K562 (cell line): ENCODE measurements at regions of chr2 and their contacts with region 1.

Region 1: GRCh38 chr2:74587664-74588277 is 33.3 kb downstream of the DOK1 start:
- DNase-seq: peak; percentile 41 to 82 (median 62)
- ATAC-seq: peak; percentile 91
- H3K4me3 ChIP-seq: no peak overlapping the region
- H3K27ac ChIP-seq: no peak overlapping the region
- H3K4me1 ChIP-seq: peaks cover 3% of the 10 kb centered on the region in 2 experiments; a peak in 3 of 5 replicates
- H3K27me3 ChIP-seq: peaks cover 3 to 4% of the 10 kb centered on the region in 2 experiments; a peak in 2 of 5 replicates
- CTCF ChIP-seq: peak; percentile 73 to 90 (median 76)
- EP300 ChIP-seq: no peak
- POLR2A ChIP-seq: no peak
- RAD21 ChIP-seq: peak; percentile 89 to 91

Region 2: DNA sequence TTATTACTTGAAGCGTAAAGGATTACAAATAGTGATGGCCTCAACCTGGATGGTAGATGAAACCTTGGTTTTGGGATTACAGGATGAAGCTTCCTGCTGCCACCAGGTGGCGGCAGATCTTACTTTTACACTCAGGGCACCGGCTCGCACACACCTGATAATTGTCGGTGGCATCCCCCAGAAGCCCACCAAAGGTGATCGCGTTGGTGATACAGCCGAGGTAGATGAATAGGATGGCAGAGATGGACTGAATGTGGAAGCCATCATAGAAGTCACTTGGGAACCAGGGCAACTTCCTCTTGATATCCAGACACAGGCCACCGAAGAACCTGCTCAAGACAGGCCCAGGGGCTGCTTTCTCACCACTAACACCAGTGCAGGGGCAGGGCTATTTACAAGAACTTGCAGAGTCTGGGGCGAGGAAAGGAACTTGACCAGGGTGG is 337.6 kb before region 1 on chr2:
- CTCF ChIA-PET with region 1: interaction called, 6 read pairs
- POLR2A ChIA-PET with region 1: no interaction called
- in situ Hi-C with region 1: no loop called
- intact Hi-C with region 1: loop called (anchors 10 kb)
- DNase-seq: peak; percentile 72 to 76 (median 75)
- ATAC-seq: peak; percentile 88
- H3K4me3 ChIP-seq: no peak overlapping the region
- H3K27ac ChIP-seq: no peak overlapping the region
- H3K4me1 ChIP-seq: peaks cover 0 to 3% of the 10 kb centered on the region in 2 experiments; a peak in 2 of 5 replicates
- H3K27me3 ChIP-seq: peaks cover 9 to 40% of the 10 kb centered on the region in 2 experiments; a peak in 4 of 5 replicates
- CTCF ChIP-seq: peak; percentile 75 to 87 (median 86)
- EP300 ChIP-seq: no peak; the same call in 1 of the 2 replicates
- POLR2A ChIP-seq: no peak
- RAD21 ChIP-seq: peak; percentile 72 to 89

Region 3: DNA sequence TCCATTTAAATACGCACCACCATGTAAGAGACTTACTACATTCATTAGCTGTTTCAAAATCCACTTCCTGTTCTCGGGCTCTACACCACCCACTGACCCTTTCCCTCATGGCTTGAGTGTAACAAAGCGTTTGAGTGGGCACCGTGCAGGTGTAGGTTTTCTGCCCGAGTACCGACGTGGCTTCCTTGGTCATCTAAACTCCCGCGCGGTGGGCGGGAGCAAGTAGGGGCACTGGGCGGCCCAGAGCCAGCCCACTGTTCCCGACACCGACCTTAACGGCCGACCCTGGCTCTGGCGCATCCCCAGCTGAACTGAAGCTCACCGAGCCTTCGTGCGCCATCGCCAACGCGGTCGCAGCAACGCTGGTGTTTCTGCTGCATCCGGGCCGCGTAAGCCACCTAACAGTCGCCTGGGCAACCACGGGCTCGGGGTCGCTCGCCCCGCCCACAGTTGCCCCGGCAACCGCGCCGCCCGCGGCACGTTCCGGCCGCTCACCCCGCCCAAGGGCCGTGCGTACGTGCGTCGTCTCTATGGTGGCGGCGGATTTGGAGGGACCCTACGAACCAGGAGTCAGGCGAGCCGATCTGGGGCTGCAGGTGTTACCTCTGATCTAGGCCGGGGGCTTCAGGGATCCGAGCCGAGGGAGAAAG is 166.4 kb before region 1 on chr2 and contains the starts of genes C2orf81 and WDR54:
- CTCF ChIA-PET with region 1: no interaction called
- POLR2A ChIA-PET with region 1: no interaction called
- in situ Hi-C with region 1: no loop called
- intact Hi-C with region 1: loop called (anchors 5 kb)
- DNase-seq: peak; percentile 90 to 97 (median 94)
- ATAC-seq: peak; percentile 94
- H3K4me3 ChIP-seq: peak within 1 kb of the TSS; percentile 53
- H3K27ac ChIP-seq: no peak within 1 kb of the TSS; the same call in 2 of the 3 replicates
- H3K4me1 ChIP-seq: peaks cover 5 to 25% of the 10 kb centered on the region in 2 experiments; a peak in 3 of 5 replicates
- H3K27me3 ChIP-seq: peaks cover 4 to 12% of the 10 kb centered on the region in 2 experiments; a peak in 3 of 5 replicates
- CTCF ChIP-seq: no peak
- EP300 ChIP-seq: no peak
- POLR2A ChIP-seq: no peak
- RAD21 ChIP-seq: no peak
- polyA plus RNA-seq, gene C2orf81: not detected
- polyA plus RNA-seq, gene WDR54: 9.3 to 9.6 TPM

Region 4: DNA sequence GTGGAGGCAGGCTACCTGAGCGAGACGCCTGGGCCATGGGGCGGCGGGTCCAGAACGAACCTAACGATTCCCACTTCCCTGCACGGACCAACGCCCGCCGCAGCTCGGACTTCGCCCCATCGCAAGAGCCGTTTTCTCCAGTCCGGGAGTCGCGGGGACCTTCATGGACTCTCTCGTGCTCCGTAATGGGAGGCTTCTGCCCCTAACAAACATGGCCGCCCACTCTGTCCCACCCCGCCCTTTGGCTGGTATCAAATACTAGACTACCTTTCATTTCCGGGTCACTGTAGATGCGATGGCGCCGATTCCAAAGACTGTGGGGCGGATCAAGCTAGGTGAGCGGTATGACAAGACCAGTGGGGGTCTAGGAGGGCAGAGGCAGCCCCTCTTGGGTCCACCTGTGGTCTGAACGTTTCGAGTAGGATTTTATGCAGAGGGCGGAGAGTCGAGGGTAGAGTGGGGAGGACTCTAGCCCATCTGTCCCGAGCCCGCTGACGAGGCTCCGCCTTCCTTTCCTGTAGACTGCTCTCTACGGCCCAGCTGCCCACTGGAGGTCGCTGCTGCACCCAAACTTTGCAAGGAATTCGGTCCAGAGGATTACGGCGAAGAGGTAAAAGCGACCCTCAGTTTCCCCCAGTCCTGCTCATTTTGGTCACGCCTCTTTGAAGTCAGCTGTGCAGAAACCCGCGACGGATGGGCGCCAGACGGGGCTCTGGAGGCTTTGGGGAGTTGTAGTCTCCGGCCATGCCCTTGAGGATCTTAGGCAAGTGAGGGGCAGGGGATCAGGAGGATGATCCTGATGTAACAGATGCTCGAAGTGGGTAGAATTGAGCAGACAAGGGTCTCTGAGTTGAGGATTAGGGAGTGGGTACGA is 104.7 kb before region 1 on chr2 and contains the starts of genes CCDC142 and TTC31:
- CTCF ChIA-PET with region 1: interaction called, 6 read pairs
- POLR2A ChIA-PET with region 1: interaction called, 5 read pairs
- in situ Hi-C with region 1: no loop called
- intact Hi-C with region 1: loop called (anchors 1 kb)
- DNase-seq: peak; percentile 90 to 96 (median 91)
- ATAC-seq: peak; percentile 95
- H3K4me3 ChIP-seq: peak within 1 kb of the TSS; percentile 86
- H3K27ac ChIP-seq: peak within 1 kb of the TSS; percentile 92
- H3K4me1 ChIP-seq: peaks cover 8 to 23% of the 10 kb centered on the region in 2 experiments; a peak in 4 of 5 replicates
- H3K27me3 ChIP-seq: no peaks in the 10 kb centered on the region
- CTCF ChIP-seq: peak; percentile 86 to 95 (median 92)
- EP300 ChIP-seq: 0 out of 2 replicates have a peak, but pooled peaks have one; percentile 1
- POLR2A ChIP-seq: peak; percentile 91
- RAD21 ChIP-seq: peak; percentile 88 to 89
- polyA plus RNA-seq, gene CCDC142: 0.55 to 0.58 TPM
- polyA plus RNA-seq, gene TTC31: 4.7 to 5.0 TPM

Region 5: DNA sequence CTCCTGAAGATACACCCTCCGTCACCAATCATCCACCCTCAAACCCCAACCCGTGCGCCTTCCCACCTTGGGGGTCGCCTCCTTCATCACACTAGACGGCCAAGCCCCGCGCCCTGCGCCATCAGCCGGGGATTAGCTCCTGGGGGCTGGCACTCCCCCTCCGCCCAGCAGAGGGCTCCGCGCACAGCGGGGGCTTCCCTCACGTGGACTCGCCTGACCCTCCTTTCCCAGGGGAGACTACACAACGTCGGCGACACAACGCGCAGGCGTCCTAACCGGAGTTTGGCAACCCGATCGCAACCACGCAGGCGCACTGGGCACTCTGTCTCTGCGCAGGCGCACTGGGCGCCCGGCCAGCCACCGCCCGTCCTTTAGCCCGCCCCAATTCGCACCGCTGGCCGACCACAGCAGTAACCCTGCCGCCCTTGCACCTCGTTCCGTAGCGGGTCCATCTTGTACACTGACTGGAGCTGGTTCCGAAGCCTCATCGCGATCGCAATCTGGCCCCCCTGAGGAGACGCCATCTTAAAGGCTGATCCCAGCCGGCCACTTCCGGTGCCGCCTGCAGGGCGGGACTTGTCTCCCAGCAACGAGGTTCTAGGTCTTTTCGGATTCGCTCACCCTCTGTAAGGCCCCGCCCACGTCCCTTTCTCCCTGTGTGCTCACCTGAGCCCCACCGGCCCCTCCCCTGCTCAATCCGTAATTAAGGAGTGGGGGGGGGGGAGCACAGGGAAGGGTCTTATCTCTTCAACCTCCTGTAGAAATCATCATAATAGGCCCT is 80.4 kb before region 1 on chr2 and contains the start of gene PCGF1:
- CTCF ChIA-PET with region 1: no interaction called
- POLR2A ChIA-PET with region 1: interaction called, 4 read pairs
- in situ Hi-C with region 1: no loop called
- intact Hi-C with region 1: loop called (anchors 1 kb)
- DNase-seq: peak; percentile 95 to 99 (median 96)
- ATAC-seq: peak; percentile 80
- H3K4me3 ChIP-seq: peak within 1 kb of the TSS; percentile 78
- H3K27ac ChIP-seq: peak within 1 kb of the TSS; percentile 97
- H3K4me1 ChIP-seq: peaks cover 36 to 55% of the 10 kb centered on the region in 2 experiments; a peak in 4 of 5 replicates
- H3K27me3 ChIP-seq: no peaks in the 10 kb centered on the region
- CTCF ChIP-seq: peak; percentile 42 to 57 (median 54); a peak in 5 of 6 replicates
- EP300 ChIP-seq: peak; percentile 17; the same call in 1 of the 2 replicates
- POLR2A ChIP-seq: peak; percentile 86
- RAD21 ChIP-seq: peak; percentile 15 to 30; a peak in 3 of 4 replicates
- polyA plus RNA-seq, gene PCGF1: 45.3 to 45.7 TPM

Region 6: GRCh38 chr2:74573747-74574562 is 13.8 kb before region 1 on chr2:
- CTCF ChIA-PET with region 1: no interaction called
- POLR2A ChIA-PET with region 1: interaction called, 13 read pairs
- in situ Hi-C with region 1: no loop called
- intact Hi-C with region 1: no loop called
- DNase-seq: peak in 2 of 4 experiments; percentile 63 to 70
- ATAC-seq: peak; percentile 76
- H3K4me3 ChIP-seq: no peak overlapping the region
- H3K27ac ChIP-seq: peak overlapping the region; percentile 43
- H3K4me1 ChIP-seq: peaks cover 0 to 42% of the 10 kb centered on the region in 2 experiments; a peak in 4 of 5 replicates
- H3K27me3 ChIP-seq: no peaks in the 10 kb centered on the region
- CTCF ChIP-seq: no peak; a peak in 1 of 6 replicates
- EP300 ChIP-seq: peak; percentile 48; the same call in 1 of the 2 replicates
- POLR2A ChIP-seq: 0 out of 2 replicates have a peak, but pooled peaks have one; percentile 24
- RAD21 ChIP-seq: no peak; a peak in 1 of 4 replicates

Region 7: DNA sequence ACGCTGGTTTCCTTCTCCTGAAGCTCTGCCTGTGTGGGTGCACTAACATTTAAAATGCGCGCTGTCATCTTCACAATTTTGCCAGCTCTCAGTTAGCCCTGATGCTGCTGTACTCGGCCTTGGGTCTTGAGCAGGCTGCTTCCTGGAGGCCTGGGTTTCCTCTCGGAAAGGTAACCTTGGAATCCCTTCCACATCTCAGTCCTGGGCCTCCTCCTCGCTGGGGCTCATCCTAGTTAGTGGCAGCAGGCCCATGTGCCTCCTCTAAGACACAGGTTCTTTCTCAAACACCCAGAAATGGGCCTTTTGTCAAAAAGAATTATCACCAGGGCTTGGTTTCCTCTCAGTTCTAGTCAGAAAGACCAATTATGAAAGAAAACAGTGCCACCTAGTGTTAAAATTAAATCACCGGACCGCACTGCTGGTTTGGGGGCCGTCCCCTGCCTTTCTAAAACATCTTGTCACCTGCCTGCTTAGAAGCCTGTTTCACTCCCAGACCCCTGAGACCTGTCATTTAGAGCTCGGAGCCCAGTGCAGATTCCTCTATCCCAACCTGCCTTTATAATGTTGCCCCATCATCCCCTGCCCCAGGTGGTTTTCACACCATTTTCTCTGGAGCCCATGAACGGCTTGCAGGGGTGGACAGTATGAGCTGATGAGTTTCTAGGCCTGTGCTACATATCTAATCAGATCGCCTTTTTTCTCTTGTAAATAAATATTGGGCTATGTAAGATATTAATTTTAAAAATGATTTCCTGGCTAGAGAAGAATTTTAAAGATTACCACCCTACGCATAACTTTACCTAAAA is 288.5 kb after region 1 on chr2:
- CTCF ChIA-PET with region 1: no interaction called
- POLR2A ChIA-PET with region 1: interaction called, 3 read pairs
- in situ Hi-C with region 1: no loop called
- intact Hi-C with region 1: loop called (anchors 2 kb)
- DNase-seq: peak; percentile 57 to 63 (median 60)
- ATAC-seq: peak; percentile 98
- H3K4me3 ChIP-seq: no peak overlapping the region
- H3K27ac ChIP-seq: no peak overlapping the region
- H3K4me1 ChIP-seq: no peaks in the 10 kb centered on the region
- H3K27me3 ChIP-seq: no peaks in the 10 kb centered on the region
- CTCF ChIP-seq: peak; percentile 62 to 76 (median 66)
- EP300 ChIP-seq: no peak
- POLR2A ChIP-seq: no peak
- RAD21 ChIP-seq: peak; percentile 77 to 87

Region 8: GRCh38 chr2:75021657-75022056 is 433.9 kb after region 1 on chr2:
- CTCF ChIA-PET with region 1: no interaction called
- POLR2A ChIA-PET with region 1: no interaction called
- in situ Hi-C with region 1: no loop called
- intact Hi-C with region 1: no loop called
- DNase-seq: no peak
- ATAC-seq: no peak
- H3K4me3 ChIP-seq: no peak overlapping the region
- H3K27ac ChIP-seq: no peak overlapping the region
- H3K4me1 ChIP-seq: no peaks in the 10 kb centered on the region
- H3K27me3 ChIP-seq: peaks cover 0 to 10% of the 10 kb centered on the region in 2 experiments; a peak in 3 of 5 replicates
- CTCF ChIP-seq: no peak
- EP300 ChIP-seq: no peak
- POLR2A ChIP-seq: no peak
- RAD21 ChIP-seq: no peak

Region 9: GRCh38 chr2:75076088-75076487 is 488.3 kb after region 1 on chr2:
- CTCF ChIA-PET with region 1: no interaction called
- POLR2A ChIA-PET with region 1: no interaction called
- in situ Hi-C with region 1: no loop called
- intact Hi-C with region 1: no loop called
- DNase-seq: no peak
- ATAC-seq: no peak
- H3K4me3 ChIP-seq: no peak overlapping the region
- H3K27ac ChIP-seq: no peak overlapping the region
- H3K4me1 ChIP-seq: no peaks in the 10 kb centered on the region
- H3K27me3 ChIP-seq: peaks cover 0 to 3% of the 10 kb centered on the region in 2 experiments; a peak in 1 of 5 replicates
- CTCF ChIP-seq: no peak
- EP300 ChIP-seq: no peak
- POLR2A ChIP-seq: no peak
- RAD21 ChIP-seq: no peak

Region 10: GRCh38 chr2:75513616-75514170 is 925.9 kb after region 1 on chr2:
- CTCF ChIA-PET with region 1: no interaction called
- POLR2A ChIA-PET with region 1: no interaction called
- in situ Hi-C with region 1: no loop called
- intact Hi-C with region 1: no loop called
- DNase-seq: no peak
- ATAC-seq: no peak
- H3K4me3 ChIP-seq: no peak overlapping the region
- H3K27ac ChIP-seq: no peak overlapping the region
- H3K4me1 ChIP-seq: no peaks in the 10 kb centered on the region
- H3K27me3 ChIP-seq: no peaks in the 10 kb centered on the region
- CTCF ChIP-seq: no peak
- EP300 ChIP-seq: no peak
- POLR2A ChIP-seq: no peak
- RAD21 ChIP-seq: no peak

Region 11: DNA sequence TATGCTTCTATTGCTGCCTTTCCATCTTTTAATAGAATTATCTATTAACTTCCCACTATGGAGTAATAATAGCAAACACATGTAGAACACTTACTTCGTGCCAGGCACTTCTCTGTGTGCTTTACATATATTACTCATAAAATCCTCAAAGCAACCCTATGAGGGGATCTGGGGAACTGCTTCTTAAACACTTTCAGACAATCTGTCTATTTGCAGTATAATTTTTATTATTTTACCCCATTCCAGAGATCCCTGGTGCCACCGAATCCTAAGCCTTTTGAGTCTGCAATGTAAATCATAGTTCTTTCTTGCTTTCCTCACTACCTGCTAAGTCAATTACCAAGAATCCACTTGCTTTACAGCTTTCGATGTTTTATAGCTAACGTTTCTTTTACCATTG is 1148.5 kb after region 1 on chr2:
- CTCF ChIA-PET with region 1: no interaction called
- POLR2A ChIA-PET with region 1: no interaction called
- in situ Hi-C with region 1: no loop called
- intact Hi-C with region 1: no loop called
- DNase-seq: no peak
- ATAC-seq: no peak
- H3K4me3 ChIP-seq: no peak overlapping the region
- H3K27ac ChIP-seq: no peak overlapping the region
- H3K4me1 ChIP-seq: no peaks in the 10 kb centered on the region
- H3K27me3 ChIP-seq: no peaks in the 10 kb centered on the region
- CTCF ChIP-seq: no peak
- EP300 ChIP-seq: no peak
- POLR2A ChIP-seq: no peak
- RAD21 ChIP-seq: no peak